H1 (cell line): ENCODE measurements at regions of chr15 and their contacts with region 1.

Region 1: GRCh38 chr15:100873029-100873677 is 6.5 kb upstream of the ALDH1A3 start:
- DNase-seq: peak in 1 of 2 experiments; percentile 74
- H3K4me3 ChIP-seq: no peak overlapping the region
- H3K27ac ChIP-seq: no peak overlapping the region
- H3K4me1 ChIP-seq: peaks cover 0 to 6% (median 3%) of the 10 kb centered on the region in 4 experiments; a peak in 2 of 7 replicates
- H3K27me3 ChIP-seq: peaks cover 0 to 11% (median 8%) of the 10 kb centered on the region in 4 experiments; a peak in 6 of 7 replicates
- CTCF ChIP-seq: peak in 2 of 3 experiments; percentile 80 to 88; a peak in 3 of 4 replicates
- EP300 ChIP-seq: no peak
- POLR2A ChIP-seq: no peak
- RAD21 ChIP-seq: peak; percentile 71 to 77

Region 2: GRCh38 chr15:100627789-100628395 is 245.3 kb before region 1 on chr15:
- CTCF ChIA-PET with region 1: interaction called, 43 read pairs
- POLR2A ChIA-PET with region 1: no interaction called
- DNase-seq: peak; percentile 38 to 74
- H3K4me3 ChIP-seq: no peak overlapping the region
- H3K27ac ChIP-seq: no peak overlapping the region
- H3K4me1 ChIP-seq: no peaks in the 10 kb centered on the region; a peak in 1 of 7 replicates
- H3K27me3 ChIP-seq: no peaks in the 10 kb centered on the region
- CTCF ChIP-seq: peak; percentile 39 to 82 (median 69)
- EP300 ChIP-seq: no peak
- POLR2A ChIP-seq: no peak
- RAD21 ChIP-seq: peak; percentile 88 to 91

Region 3: GRCh38 chr15:100671858-100672543 is 201.2 kb before region 1 on chr15:
- CTCF ChIA-PET with region 1: interaction called, 79 read pairs
- POLR2A ChIA-PET with region 1: no interaction called
- DNase-seq: no peak
- H3K4me3 ChIP-seq: no peak overlapping the region
- H3K27ac ChIP-seq: no peak overlapping the region
- H3K4me1 ChIP-seq: no peaks in the 10 kb centered on the region
- H3K27me3 ChIP-seq: no peaks in the 10 kb centered on the region
- CTCF ChIP-seq: peak; percentile 61 to 70 (median 67)
- EP300 ChIP-seq: no peak
- POLR2A ChIP-seq: no peak
- RAD21 ChIP-seq: peak; percentile 83 to 84

Region 4: DNA sequence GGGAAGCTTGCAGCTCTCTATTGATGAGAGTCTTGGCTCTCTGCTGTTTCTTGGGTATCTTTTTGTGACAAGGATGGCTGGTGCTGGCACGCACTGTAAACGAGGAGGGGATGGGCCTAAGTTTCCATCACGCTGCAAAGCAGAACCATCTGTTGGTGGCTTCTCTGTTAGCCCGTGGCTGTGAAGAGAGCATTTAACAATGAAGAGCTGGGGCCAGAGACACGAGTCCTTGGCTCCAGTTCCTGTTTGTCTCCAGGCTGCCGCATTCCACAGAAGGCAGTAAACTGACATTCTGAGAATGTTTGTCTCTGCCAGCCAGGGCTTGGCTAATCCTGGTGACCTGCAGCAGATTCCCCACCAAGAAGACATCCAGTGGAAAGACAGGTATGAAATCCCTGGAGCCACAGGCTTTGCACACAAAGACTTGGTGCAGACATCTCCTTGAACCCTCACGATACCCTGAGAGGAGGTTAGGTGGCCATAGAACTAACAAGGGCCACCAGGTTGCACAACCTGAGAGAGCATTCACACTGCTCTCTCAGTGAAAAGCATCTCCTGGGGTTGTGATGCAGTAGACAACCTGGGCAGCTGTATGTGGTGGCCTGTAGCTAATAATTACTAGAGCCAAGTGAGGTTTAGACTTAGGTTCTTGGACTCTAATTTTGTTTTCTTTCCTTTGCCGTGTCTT is 139.9 kb before region 1 on chr15:
- CTCF ChIA-PET with region 1: interaction called, 95 read pairs
- POLR2A ChIA-PET with region 1: no interaction called
- DNase-seq: peak in 1 of 2 experiments; percentile 19
- H3K4me3 ChIP-seq: no peak overlapping the region
- H3K27ac ChIP-seq: no peak overlapping the region
- H3K4me1 ChIP-seq: no peaks in the 10 kb centered on the region; a peak in 1 of 7 replicates
- H3K27me3 ChIP-seq: no peaks in the 10 kb centered on the region
- CTCF ChIP-seq: no peak
- EP300 ChIP-seq: no peak
- POLR2A ChIP-seq: no peak
- RAD21 ChIP-seq: no peak

Region 5: DNA sequence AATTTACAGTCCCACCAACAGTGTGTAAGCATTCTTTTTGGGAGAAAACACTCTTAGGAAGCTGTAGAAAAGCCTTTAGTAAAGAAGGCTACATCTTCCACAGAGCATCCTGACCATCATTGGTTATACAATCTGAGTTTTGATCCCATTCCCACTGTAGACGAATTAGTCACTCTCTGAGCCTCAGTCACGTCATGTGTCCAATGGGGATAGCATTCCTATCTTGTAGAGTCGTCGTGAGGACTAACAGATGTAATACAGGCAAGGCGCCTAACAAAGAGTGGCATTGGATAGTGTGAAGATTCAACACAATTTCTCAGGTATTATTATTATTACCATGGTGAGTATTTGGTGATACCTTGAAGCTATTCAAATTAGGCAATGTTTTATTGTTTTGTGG is 37.5 kb before region 1 on chr15:
- CTCF ChIA-PET with region 1: interaction called, 14 read pairs
- POLR2A ChIA-PET with region 1: no interaction called
- DNase-seq: no peak
- H3K4me3 ChIP-seq: no peak overlapping the region
- H3K27ac ChIP-seq: no peak overlapping the region
- H3K4me1 ChIP-seq: no peaks in the 10 kb centered on the region
- H3K27me3 ChIP-seq: no peaks in the 10 kb centered on the region
- CTCF ChIP-seq: no peak
- EP300 ChIP-seq: no peak
- POLR2A ChIP-seq: no peak
- RAD21 ChIP-seq: no peak

Region 6: DNA sequence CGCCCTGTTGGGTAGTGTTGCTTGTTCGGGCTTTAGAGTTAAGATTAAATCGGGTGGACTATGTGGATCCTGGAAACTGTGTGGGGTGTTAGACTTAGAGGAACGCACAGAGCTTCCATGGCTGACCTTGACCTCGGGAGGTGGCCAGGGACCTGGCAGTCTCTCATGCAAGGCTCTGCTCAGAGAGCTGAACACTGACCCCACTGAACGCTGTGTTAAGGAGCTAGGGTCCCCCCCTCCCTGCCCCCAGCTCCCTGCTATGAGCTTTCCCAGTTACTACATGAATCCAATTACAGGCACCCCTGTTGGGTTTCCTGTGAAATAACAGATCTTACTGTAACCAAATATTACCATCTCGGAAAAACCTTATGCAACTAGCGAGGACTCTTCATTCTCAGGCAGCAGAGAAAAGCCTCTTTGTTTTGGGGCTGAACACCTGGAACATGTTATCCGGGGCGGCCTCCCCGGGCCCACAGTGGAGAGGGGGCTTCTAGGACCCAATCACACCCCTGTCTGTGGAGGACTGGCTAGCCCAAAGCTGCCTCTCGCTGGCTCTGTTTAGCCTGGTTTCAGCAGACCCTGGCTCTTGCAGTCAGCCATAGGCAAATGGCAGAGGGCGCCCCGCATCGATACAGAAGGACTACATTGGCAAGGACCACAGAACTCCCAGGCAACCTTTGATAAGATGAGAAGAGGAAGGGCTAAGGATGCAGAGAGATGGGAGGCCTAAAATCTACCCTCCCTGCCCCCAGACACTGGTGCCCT is 19.3 kb before region 1 on chr15:
- CTCF ChIA-PET with region 1: interaction called, 29 read pairs
- POLR2A ChIA-PET with region 1: no interaction called
- DNase-seq: no peak
- H3K4me3 ChIP-seq: no peak overlapping the region
- H3K27ac ChIP-seq: no peak overlapping the region
- H3K4me1 ChIP-seq: no peaks in the 10 kb centered on the region
- H3K27me3 ChIP-seq: no peaks in the 10 kb centered on the region
- CTCF ChIP-seq: no peak
- EP300 ChIP-seq: no peak
- POLR2A ChIP-seq: no peak
- RAD21 ChIP-seq: no peak

Region 7: GRCh38 chr15:100918034-100918689 is 45.0 kb after region 1 on chr15:
- CTCF ChIA-PET with region 1: interaction called, 34 read pairs
- POLR2A ChIA-PET with region 1: no interaction called
- DNase-seq: peak in 1 of 2 experiments; percentile 94
- H3K4me3 ChIP-seq: peak overlapping the region; percentile 42 to 68 (median 48)
- H3K27ac ChIP-seq: no peak overlapping the region
- H3K4me1 ChIP-seq: peaks cover 0 to 6% (median 1%) of the 10 kb centered on the region in 4 experiments; a peak in 4 of 7 replicates
- H3K27me3 ChIP-seq: peaks cover 31 to 59% (median 48%) of the 10 kb centered on the region in 4 experiments
- CTCF ChIP-seq: peak; percentile 88 to 97 (median 93)
- EP300 ChIP-seq: peak in 1 of 2 experiments; percentile 52; a peak in 1 of 3 replicates
- POLR2A ChIP-seq: no peak
- RAD21 ChIP-seq: peak; percentile 84 to 86

Region 8: DNA sequence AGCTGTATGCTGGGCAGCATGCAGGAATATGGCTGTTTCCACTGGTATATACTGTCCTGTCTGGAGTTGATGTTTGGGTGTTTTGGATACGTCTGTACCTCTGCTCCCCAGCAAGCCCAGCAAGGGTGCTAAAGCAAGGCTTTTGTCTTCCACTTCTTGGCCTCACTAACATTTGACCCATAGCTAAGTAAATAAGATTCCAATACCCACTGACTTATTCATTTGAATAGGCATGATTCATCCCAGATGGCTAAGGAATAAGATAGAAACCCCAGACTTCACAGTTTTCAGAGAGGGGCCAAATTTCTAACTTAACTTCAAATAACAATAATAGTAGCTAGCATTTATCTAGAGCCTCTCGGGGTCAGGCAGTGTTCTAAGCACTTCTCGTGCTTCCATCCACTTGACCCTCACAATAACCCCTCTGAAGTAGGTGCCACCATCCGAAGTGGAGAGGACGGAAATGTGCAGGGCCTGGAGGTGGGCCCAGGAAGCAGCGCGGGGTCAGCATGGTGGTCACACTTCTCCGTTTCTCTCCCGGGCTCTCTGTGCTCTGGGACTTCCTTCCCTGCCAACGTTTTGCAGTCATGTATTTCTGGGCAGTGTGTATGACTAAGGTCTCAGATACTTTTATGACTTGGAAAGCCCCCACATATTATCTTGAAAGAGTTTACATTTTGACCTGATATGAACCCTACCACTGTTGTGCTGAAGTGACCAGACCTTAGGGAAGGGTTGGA is 85.3 kb after region 1 on chr15:
- CTCF ChIA-PET with region 1: no interaction called
- POLR2A ChIA-PET with region 1: no interaction called
- DNase-seq: no peak
- H3K4me3 ChIP-seq: no peak overlapping the region
- H3K27ac ChIP-seq: no peak overlapping the region
- H3K4me1 ChIP-seq: no peaks in the 10 kb centered on the region; a peak in 1 of 7 replicates
- H3K27me3 ChIP-seq: no peaks in the 10 kb centered on the region
- CTCF ChIP-seq: no peak
- EP300 ChIP-seq: no peak
- POLR2A ChIP-seq: no peak
- RAD21 ChIP-seq: no peak

Region 9: DNA sequence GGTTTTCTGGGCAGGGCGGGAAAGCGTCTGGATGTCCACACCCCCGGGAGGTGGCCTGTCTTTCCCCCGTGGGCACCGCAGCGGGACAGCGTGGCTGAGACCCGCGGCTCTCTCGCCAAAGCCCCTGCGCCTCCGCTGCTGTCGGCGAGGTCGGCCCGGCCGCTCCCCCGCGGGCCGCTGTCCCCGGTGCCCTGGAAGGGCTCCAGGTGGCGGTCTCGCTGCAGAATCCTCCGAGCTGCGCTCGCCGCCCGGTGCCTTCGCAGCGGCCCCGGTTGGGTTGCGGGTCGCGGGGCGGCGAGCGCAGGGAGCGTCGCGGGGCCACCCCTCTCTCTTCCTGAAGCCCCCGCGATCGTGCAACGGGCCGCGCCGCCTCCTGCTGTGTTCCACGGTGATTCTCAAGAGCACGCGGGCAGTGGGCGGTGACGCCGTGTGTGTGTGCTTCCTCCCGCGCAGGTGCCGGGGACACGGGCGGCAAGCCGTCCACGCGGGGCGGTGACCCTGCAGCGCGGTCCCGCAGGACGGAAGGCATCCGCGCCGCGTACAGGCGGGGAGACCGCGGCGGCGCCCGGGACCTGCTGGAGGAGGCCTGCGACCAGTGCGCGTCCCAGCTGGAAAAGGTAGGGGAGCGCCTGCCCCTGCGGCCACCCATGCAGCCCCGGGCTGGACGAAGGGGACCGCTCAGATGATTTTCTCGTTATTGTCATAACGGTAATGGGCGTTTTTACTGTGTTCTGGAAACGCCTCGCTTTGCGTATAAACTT is 100.4 kb after region 1 on chr15:
- CTCF ChIA-PET with region 1: no interaction called
- POLR2A ChIA-PET with region 1: no interaction called
- DNase-seq: peak in 1 of 2 experiments; percentile 62
- H3K4me3 ChIP-seq: peak overlapping the region; percentile 19 to 60 (median 44)
- H3K27ac ChIP-seq: no peak overlapping the region
- H3K4me1 ChIP-seq: peaks cover 0 to 13% (median 4%) of the 10 kb centered on the region in 4 experiments; a peak in 6 of 7 replicates
- H3K27me3 ChIP-seq: peaks cover 13 to 38% (median 27%) of the 10 kb centered on the region in 4 experiments
- CTCF ChIP-seq: peak in 1 of 3 experiments; percentile 30; a peak in 1 of 4 replicates
- EP300 ChIP-seq: no peak
- POLR2A ChIP-seq: no peak
- RAD21 ChIP-seq: peak; percentile 20 to 55; a peak in 3 of 4 replicates